ENCODE measurements at regions of chr5 and their contacts with region 1.

Region 1: DNA sequence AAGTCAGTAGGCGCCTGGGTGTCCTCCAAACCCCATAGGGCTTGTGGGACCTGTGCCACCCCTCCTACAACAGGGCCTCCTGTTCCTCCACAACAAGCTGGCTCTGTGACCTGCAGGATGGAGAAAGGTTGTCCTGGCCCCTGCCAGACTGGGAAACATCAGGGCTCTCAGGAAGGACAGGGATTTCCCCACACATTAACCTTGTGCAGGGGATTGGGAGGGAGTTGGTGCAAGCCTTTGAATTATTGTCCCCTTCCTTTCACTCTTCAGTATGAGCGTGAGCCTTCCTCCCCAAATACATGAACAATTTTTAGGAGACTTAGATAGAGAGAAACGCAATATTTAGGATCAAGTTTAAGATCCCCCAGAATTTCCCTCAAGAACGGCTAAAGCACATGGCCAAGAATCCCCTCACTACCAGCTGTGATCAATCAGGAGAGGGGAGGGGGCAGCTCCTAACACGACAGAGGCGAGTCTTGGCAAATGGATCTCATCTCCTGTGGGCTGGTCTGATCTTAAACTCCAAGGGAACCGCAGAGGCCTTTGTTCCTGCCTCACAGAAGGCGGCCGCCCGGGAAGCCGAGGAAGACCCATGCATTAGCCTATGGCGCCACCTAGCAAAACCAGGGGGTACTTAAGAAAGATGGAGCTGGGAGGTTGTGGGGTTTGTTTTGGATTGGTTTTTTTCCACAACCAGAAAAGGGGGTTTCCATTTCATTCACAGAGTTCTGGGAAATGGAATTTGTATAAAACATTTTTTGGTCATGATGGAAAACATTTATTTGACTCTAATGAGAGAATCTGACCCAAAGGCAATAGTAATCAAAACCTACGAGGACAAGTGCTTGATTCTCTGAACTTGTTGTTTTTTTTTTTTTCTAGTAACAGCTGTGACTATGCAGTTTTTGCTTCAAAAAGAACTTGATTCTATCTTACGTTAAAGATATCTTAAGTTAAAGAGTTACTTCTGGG is 36.1 kb upstream of the OSMR start:
- DNase-seq: peak; percentile 30
- H3K4me3 ChIP-seq: no peak overlapping the region
- H3K27me3 ChIP-seq: no peaks in the 10 kb centered on the region
- CTCF ChIP-seq: peak; percentile 91

Region 2: GRCh38 chr5:38265546-38266179 is 544.0 kb before region 1 on chr5:
- CTCF ChIA-PET with region 1: interaction called, 18 read pairs
- POLR2A ChIA-PET with region 1: no interaction called
- DNase-seq: no peak
- H3K4me3 ChIP-seq: no peak overlapping the region
- H3K27me3 ChIP-seq: peaks cover 2% of the 10 kb centered on the region; the same call in 1 of the 2 replicates
- CTCF ChIP-seq: peak; percentile 75

Region 3: GRCh38 chr5:38382898-38383297 is 426.8 kb before region 1 on chr5:
- CTCF ChIA-PET with region 1: interaction called, 38 read pairs
- POLR2A ChIA-PET with region 1: no interaction called
- DNase-seq: no peak
- H3K4me3 ChIP-seq: no peak overlapping the region
- H3K27me3 ChIP-seq: peaks cover 11% of the 10 kb centered on the region
- CTCF ChIP-seq: peak; percentile 89

Region 4: GRCh38 chr5:38420691-38421390 is 388.8 kb before region 1 on chr5:
- CTCF ChIA-PET with region 1: interaction called, 52 read pairs
- POLR2A ChIA-PET with region 1: no interaction called
- DNase-seq: no peak
- H3K4me3 ChIP-seq: no peak overlapping the region
- H3K27me3 ChIP-seq: peaks cover 2% of the 10 kb centered on the region
- CTCF ChIP-seq: peak; percentile 80

Region 5: DNA sequence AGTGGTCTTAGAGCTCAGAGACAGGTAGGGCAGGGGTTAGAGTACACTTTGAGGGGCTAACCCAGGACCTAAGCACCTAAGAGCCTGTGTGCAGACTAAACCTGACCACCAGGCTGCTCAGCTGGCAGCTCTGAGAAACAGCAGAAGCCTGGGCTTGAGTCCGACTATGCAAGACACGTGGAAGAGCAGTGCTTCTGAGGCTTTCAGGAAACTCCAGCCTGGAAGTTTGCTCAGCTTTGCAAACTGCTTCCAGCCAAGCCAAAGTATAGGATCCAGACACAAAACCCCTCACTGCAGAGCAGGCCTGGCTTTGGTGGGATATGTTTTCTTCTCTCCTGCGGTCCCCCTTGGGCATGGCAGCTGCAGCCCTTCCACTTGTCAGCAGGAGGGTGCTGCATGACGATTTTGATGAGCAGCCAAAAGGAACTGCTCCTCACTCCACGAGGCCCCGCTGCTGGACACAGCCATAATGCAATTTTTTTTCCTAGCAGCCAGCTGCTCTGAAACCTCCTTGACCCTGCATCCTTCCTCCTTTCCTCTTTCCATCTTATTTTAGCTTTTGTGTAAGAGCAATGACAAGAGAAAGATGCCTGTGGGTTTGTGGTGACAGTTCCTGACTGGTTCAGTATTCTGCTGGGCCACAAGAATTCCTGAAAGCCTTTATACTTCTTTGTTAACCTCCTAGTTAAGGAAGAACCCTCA is 376.4 kb before region 1 on chr5:
- CTCF ChIA-PET with region 1: interaction called, 35 read pairs
- POLR2A ChIA-PET with region 1: no interaction called
- DNase-seq: peak; percentile 63
- H3K4me3 ChIP-seq: no peak overlapping the region
- H3K27me3 ChIP-seq: no peaks in the 10 kb centered on the region
- CTCF ChIP-seq: 0 out of 2 replicates have a peak, but pooled peaks have one; percentile 19

Region 6: DNA sequence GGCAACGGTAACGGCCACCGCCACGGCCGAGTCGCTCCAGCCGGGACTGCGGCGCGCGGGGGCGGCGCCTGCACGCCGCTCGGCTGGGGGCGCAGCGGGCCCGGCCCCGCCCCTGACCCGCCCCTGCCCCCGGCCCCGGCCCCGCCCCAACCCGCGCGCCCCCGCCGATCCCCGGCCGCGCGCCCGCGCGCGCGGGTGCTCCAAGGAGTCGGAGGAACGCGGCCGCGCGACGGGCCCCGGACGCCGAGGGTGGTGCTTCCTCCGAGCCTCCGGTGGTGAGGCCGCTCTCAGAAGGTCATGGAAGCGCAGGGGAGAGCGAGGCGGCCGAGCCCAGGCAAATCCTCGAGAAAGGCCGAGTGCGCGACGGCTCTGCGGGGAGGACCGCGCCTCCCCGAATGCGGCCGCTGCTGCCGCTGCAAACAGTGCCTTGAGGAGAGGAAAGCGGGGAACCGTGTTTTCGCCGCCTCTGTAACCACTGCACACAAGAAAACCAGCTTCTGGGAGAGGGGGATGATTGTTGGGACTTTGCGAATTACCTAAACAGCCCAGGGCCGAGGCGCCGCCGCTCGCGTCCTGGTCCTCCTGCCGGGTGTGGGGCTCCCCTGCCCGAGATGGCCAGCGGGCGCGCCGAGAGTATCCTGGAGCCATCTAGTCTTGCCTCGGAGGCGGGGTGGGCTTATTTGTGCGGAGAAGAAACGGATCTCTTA is 252.9 kb before region 1 on chr5 and contains the start of gene LIFR:
- CTCF ChIA-PET with region 1: interaction called, 18 read pairs
- POLR2A ChIA-PET with region 1: no interaction called
- DNase-seq: peak; percentile 13
- H3K4me3 ChIP-seq: peak within 1 kb of the TSS; percentile 84
- H3K27me3 ChIP-seq: 0 out of 2 replicates have a peak, but pooled peaks cover 1% of the 10 kb centered on the region
- CTCF ChIP-seq: peak; percentile 13; the same call in 1 of the 2 replicates
- polyA plus RNA-seq, gene LIFR: 2.7 and 6.8 TPM in 2 replicates

Region 7: DNA sequence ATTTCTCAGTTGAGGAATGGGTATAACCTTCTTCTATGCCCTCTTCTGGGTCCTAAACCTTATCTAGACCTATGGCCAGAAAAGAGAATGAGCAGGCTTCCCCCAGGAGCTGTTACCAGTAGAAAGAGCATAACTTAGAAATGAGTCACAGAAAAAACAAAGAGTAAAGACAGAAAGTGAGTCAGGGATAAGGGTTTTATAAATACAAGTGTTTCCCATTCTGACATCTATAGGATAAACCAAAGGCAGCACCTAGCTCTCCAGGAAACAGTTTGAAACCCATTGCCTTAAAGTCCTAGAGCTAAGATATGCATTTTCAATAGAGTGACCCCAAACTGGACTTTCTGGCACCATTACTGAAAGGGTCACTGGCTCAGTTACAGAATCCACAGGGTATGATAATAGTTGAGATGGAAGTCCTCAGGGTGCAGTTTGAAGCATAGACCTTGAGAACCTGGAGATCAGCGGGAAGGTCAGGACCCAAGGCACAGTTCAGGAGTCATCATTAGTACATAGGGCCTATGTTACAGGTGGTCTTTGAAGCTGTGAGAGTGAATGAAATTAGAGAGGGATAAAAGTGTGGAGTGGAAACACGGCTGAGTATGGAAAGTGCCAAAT is 210.6 kb before region 1 on chr5:
- CTCF ChIA-PET with region 1: interaction called, 11 read pairs
- POLR2A ChIA-PET with region 1: no interaction called
- DNase-seq: peak; percentile 40
- H3K4me3 ChIP-seq: no peak overlapping the region
- H3K27me3 ChIP-seq: no peaks in the 10 kb centered on the region
- CTCF ChIP-seq: no peak

Region 8: DNA sequence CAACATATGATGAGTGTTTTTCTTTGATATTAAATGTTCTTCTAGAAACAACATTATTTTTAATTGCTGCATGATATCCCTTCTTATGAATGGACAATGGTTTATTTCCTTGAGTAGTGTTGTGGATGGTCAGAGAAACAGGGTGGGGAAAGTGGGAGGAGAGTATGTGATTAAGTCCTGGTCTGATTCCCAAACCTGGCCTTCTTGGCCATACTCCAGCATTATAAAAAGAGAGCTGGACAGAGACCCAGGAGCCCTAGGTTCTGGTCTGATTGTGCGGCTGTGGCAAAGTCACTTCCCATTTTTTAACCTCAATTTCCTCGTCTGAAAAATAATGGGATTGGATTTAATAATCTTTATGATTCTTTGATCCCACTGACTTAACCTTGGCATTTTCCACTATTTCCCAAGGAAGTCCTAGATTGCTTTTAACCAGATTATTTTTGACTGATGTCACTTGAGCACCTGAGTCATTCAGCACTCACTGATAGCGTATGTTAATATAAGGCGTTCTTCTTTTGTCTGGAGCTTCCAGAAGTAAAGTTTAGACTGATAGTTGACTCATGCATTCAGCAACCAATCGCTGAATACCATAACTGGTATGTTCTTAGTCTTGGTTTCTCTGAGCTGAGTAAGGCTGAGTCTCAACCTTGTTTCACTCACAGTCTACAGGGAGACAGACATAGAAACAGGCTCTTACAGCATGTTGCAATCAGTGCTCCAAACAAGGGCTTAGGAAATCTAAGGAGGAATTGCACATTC is 62.3 kb after region 1 on chr5:
- CTCF ChIA-PET with region 1: no interaction called
- POLR2A ChIA-PET with region 1: no interaction called
- DNase-seq: peak; percentile 95
- H3K4me3 ChIP-seq: no peak overlapping the region
- H3K27me3 ChIP-seq: no peaks in the 10 kb centered on the region
- CTCF ChIP-seq: no peak

Region 9: DNA sequence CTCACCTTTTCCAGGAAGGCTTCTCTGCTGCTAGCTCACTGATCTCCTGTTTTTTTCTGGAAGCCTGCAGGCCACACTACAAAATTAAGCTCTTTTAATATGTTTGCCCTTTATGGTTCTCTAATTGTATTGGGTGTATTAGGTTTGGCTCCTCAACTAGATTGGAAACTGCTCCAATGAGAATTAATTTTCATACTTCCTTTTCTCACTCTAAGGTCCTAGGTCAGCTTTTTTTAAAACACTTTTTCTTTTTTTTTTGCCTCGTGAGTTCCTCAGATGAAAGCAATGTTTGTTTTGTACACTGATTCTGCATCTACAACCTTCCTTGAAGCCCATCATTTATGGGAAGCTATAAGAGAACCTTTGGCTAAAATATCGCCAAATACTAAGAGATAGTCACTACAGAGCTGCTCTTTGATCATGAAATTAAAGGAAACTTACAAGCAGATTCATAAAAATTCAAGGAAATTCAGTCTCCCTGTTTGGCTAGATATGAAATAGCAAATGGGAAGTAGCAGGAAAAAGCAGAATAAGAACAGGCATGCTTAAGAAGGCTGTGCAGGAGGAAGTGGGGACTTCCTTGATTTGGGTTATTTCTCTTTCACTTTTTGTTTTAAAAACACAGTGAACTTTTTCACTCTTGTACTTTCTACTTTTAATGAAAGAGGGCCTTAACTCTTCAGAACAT is 464.9 kb after region 1 on chr5:
- CTCF ChIA-PET with region 1: no interaction called
- POLR2A ChIA-PET with region 1: no interaction called
- DNase-seq: no peak
- H3K4me3 ChIP-seq: no peak overlapping the region
- H3K27me3 ChIP-seq: no peaks in the 10 kb centered on the region
- CTCF ChIP-seq: no peak

Measured in BJ (cell line).